MCF 10A (cell line): ENCODE measurements at regions of chr1 and their contacts with region 1.

Region 1: DNA sequence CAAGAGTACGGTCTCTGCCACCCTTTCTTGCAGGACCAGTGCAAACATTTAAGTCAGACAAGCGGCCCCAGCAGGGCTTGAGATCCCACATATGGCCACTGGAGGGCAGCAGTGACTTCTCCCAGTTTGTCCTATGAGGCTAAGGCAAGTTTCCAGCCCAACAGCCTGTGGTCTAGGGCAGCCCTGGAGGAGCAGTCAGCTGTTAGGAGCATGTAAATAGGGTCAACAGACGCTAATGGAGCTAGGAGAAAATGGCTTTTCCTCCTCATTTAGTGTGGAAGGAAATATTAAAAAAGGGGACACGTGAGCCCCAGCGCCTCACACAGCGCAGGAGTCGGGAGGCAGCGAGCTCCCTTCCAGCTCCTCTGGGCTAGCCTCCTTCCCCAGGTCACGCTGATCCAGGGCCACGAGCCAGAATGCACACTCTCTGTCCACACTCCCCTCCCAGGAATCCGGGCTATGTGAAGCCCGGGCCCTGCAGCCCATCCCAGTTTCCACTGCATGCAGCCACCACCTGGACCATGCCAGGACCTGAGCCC is 95.6 kb downstream of the LAMC2 start:
- DNase-seq: peak; percentile 96
- H3K4me3 Mint-ChIP-seq: no peak overlapping the region
- H3K27ac Mint-ChIP-seq: peak overlapping the region; percentile 60
- H3K4me1 Mint-ChIP-seq: peaks cover 56% of the 10 kb centered on the region
- H3K27me3 Mint-ChIP-seq: no peaks in the 10 kb centered on the region
- CTCF ChIP-seq: peak; percentile 92

Region 2: DNA sequence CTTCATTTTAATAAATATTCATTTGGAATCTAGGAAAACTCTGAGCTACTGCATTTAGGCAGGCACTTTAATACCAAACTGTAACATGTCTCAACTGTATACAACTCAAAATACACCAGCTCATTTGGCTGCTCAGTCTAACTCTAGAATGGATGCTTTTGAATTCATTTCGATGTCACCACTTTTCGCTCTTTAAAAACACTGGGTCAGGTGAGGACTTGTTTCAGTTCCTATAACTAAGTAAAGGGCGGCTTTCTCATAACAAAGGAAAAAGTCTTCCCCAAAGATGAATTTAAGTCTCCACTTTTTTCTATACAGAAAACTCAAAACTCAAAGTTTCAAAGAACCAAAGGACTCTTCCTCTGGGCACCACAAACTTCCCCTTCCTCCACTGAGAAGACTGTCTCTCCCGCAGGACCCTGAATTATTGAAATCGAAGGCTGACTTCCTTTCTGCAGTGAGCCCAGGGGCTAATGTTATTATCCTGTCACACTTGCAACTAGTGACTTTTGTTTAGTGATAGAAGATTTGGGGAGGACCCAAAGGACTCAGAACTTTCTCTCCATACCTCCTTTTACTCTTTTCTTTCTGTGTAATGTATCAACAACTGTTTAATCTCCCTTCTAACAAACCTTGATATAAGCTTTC is 452.2 kb before region 1 on chr1:
- CTCF ChIA-PET with region 1: no interaction called
- POLR2A ChIA-PET with region 1: no interaction called
- intact Hi-C with region 1: no loop called
- DNase-seq: no peak
- H3K4me3 Mint-ChIP-seq: no peak overlapping the region
- H3K27ac Mint-ChIP-seq: no peak overlapping the region
- H3K4me1 Mint-ChIP-seq: peaks cover 6% of the 10 kb centered on the region
- H3K27me3 Mint-ChIP-seq: no peaks in the 10 kb centered on the region
- CTCF ChIP-seq: no peak

Region 3: GRCh38 chr1:182962554-182963115 is 319.0 kb before region 1 on chr1:
- CTCF ChIA-PET with region 1: interaction called, 81 read pairs
- POLR2A ChIA-PET with region 1: interaction called, 50 read pairs
- intact Hi-C with region 1: loop called (anchors 1 kb)
- DNase-seq: peak; percentile 95
- H3K4me3 Mint-ChIP-seq: peak overlapping the region; percentile 63
- H3K27ac Mint-ChIP-seq: peak overlapping the region; percentile 98
- H3K4me1 Mint-ChIP-seq: peaks cover 13% of the 10 kb centered on the region
- H3K27me3 Mint-ChIP-seq: no peaks in the 10 kb centered on the region
- CTCF ChIP-seq: peak; percentile 98

Region 4: DNA sequence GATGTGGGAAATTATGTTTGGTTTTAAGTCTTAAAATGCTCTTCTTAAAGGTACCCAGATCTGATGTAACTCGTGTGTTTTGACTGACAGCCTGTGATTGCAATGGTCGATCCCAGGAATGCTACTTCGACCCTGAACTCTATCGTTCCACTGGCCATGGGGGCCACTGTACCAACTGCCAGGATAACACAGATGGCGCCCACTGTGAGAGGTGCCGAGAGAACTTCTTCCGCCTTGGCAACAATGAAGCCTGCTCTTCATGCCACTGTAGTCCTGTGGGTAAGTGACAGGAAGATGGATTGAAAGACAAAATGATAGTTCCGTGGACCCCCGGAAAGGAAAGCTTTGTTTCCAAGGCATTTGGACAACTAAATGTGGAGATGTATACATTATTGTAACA is 167.2 kb before region 1 on chr1:
- CTCF ChIA-PET with region 1: no interaction called
- POLR2A ChIA-PET with region 1: no interaction called
- intact Hi-C with region 1: no loop called
- DNase-seq: no peak
- H3K4me3 Mint-ChIP-seq: no peak overlapping the region
- H3K27ac Mint-ChIP-seq: no peak overlapping the region
- H3K4me1 Mint-ChIP-seq: no peaks in the 10 kb centered on the region
- H3K27me3 Mint-ChIP-seq: no peaks in the 10 kb centered on the region
- CTCF ChIP-seq: no peak

Region 5: DNA sequence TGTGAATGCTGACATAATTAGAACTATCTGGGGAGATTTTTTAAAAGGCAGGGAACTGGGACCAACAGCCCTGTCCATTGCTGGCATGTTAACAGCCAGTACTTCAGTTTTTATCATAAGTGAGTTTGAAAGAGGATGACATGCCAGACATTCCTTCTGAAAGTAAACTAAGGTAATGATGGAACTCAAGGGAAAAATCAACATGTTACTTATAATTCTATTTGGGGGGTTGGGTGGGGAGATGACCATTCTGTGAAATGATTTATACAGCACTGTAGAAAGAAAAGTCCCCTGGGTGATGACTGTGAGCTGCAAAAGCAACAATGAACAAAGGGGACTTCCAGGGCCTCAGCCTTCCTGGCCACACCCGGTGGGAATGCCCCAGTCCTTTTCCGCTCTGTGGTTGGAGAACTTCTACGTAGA is 101.0 kb before region 1 on chr1:
- CTCF ChIA-PET with region 1: interaction called, 3 read pairs
- POLR2A ChIA-PET with region 1: interaction called, 13 read pairs
- intact Hi-C with region 1: no loop called
- DNase-seq: peak; percentile 87
- H3K4me3 Mint-ChIP-seq: peak overlapping the region; percentile 23
- H3K27ac Mint-ChIP-seq: peak overlapping the region; percentile 96
- H3K4me1 Mint-ChIP-seq: peaks cover 42% of the 10 kb centered on the region
- H3K27me3 Mint-ChIP-seq: no peaks in the 10 kb centered on the region
- CTCF ChIP-seq: no peak

Region 6: DNA sequence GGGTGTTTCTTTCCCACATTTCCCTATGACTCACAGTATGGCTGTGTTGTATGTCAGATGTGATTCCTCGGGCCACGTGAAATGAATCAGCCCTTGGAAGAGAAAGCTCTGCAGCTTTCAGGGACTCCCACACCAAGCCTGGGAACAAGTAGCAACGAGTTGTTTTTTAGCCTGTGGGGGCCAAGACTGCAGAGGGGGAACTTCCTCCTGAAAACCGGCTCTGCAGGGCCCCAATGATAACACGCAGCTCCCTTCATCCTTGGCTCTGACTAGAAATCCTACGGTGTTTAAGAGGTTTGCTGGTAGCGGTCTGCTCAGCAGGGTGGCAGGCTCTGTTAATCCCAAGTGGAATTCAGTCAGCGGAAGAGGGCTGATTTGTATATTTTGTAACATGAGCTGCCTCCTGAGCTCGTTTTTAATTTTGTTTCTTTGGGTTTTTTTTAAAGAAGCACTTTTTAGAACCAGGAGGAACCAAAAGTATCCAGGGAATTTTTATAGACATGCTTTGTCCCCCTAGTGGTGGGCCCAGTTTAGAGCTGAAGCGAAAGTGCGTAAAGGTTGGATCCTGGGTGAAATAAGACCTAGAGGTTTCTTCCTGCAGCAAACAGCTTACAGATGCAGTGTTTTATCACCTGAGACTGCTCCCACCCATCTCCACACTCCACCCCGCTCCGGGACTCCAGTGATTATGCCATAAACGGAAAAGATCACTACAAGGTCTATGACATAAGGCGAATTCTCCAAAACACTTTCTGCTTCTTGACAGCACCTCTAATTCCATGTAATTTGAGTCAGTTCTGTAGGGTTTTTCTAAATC is 46.8 kb before region 1 on chr1:
- CTCF ChIA-PET with region 1: interaction called, 23 read pairs
- POLR2A ChIA-PET with region 1: interaction called, 47 read pairs
- intact Hi-C with region 1: loop called (anchors 1 kb)
- DNase-seq: peak; percentile 100
- H3K4me3 Mint-ChIP-seq: peak overlapping the region; percentile 71
- H3K27ac Mint-ChIP-seq: peak overlapping the region; percentile 86
- H3K4me1 Mint-ChIP-seq: peaks cover 49% of the 10 kb centered on the region
- H3K27me3 Mint-ChIP-seq: no peaks in the 10 kb centered on the region
- CTCF ChIP-seq: peak; percentile 83

Region 7: GRCh38 chr1:183291802-183292514 is 10.3 kb after region 1 on chr1:
- CTCF ChIA-PET with region 1: interaction called, 22 read pairs
- POLR2A ChIA-PET with region 1: no interaction called
- intact Hi-C with region 1: no loop called
- DNase-seq: no peak
- H3K4me3 Mint-ChIP-seq: no peak overlapping the region
- H3K27ac Mint-ChIP-seq: no peak overlapping the region
- H3K4me1 Mint-ChIP-seq: peaks cover 9% of the 10 kb centered on the region
- H3K27me3 Mint-ChIP-seq: no peaks in the 10 kb centered on the region
- CTCF ChIP-seq: no peak

Region 8: GRCh38 chr1:183471743-183472487 is 190.3 kb after region 1 on chr1:
- CTCF ChIA-PET with region 1: interaction called, 7 read pairs
- POLR2A ChIA-PET with region 1: interaction called, 13 read pairs
- intact Hi-C with region 1: loop called (anchors 1 kb)
- DNase-seq: peak; percentile 98
- H3K4me3 Mint-ChIP-seq: peak overlapping the region; percentile 86
- H3K27ac Mint-ChIP-seq: peak overlapping the region; percentile 98
- H3K4me1 Mint-ChIP-seq: peaks cover 21% of the 10 kb centered on the region
- H3K27me3 Mint-ChIP-seq: no peaks in the 10 kb centered on the region
- CTCF ChIP-seq: no peak

Region 9: DNA sequence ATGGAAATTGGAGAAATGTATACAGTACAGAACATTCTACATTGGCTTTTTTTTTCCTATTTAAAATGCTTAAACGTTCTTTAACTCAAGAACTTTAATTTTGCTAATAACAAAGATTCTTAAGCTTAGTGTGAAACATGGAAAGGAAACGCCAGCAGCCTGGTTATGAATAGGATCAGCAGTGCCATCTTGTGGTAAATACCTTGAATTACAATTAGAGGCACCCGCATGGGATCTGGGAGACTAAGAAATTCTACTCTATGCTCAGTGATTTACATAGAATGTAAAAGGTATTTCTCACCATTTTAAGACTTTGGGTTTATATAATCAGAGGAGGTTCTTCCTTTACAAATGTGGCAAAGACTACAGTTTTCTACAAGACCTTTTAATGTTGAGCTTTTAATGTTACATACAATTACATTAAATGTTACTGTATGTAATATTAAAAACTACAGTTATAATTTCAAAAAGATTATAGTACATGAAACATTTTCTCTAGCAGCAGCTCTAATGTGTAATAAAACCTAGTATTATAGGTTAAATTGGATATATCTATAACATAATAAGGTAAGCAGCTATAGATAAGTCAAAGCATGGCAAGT is 403.6 kb after region 1 on chr1:
- CTCF ChIA-PET with region 1: no interaction called
- POLR2A ChIA-PET with region 1: no interaction called
- intact Hi-C with region 1: loop called (anchors 1 kb)
- DNase-seq: peak; percentile 71
- H3K4me3 Mint-ChIP-seq: no peak overlapping the region
- H3K27ac Mint-ChIP-seq: no peak overlapping the region
- H3K4me1 Mint-ChIP-seq: no peaks in the 10 kb centered on the region
- H3K27me3 Mint-ChIP-seq: no peaks in the 10 kb centered on the region
- CTCF ChIP-seq: peak; percentile 88